ENCODE measurements at regions of chr13 and their contacts with region 1.

Region 1: DNA sequence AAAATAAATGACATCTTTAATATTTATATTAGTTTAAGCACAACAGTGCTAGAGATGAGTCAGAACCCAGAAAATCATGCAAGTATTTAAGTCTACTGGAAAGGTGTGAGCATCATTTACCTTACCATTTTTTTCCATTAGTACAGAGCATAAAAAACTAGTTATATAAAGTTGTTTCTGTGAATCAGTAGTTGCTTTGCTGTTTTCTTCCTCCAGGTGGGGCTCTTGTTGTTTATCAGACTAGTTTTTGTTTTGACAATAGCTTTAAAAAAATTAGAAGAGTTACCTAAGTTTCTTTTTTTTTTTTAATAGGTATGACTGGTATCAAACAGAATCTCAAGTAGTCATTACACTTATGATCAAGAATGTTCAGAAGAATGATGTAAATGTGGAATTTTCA is 12.7 kb downstream of the SUGT1 start:
- DNase-seq: peak; percentile 22
- H3K4me3 ChIP-seq: no peak overlapping the region
- H3K27ac ChIP-seq: no peak overlapping the region
- H3K4me1 ChIP-seq: no peaks in the 10 kb centered on the region; a peak in 1 of 4 replicates
- H3K27me3 ChIP-seq: no peaks in the 10 kb centered on the region
- CTCF ChIP-seq: peak; percentile 67
- EP300 ChIP-seq: no peak
- RAD21 ChIP-seq: peak; percentile 59

Region 2: GRCh38 chr13:52686381-52686780 is 21.1 kb after region 1 on chr13:
- CTCF ChIA-PET with region 1: interaction called, 25 read pairs
- POLR2A ChIA-PET with region 1: interaction called, 4 read pairs
- DNase-seq: no peak
- H3K4me3 ChIP-seq: no peak overlapping the region
- H3K27ac ChIP-seq: no peak overlapping the region
- H3K4me1 ChIP-seq: no peaks in the 10 kb centered on the region
- H3K27me3 ChIP-seq: no peaks in the 10 kb centered on the region
- CTCF ChIP-seq: no peak
- EP300 ChIP-seq: no peak
- RAD21 ChIP-seq: no peak

Region 3: DNA sequence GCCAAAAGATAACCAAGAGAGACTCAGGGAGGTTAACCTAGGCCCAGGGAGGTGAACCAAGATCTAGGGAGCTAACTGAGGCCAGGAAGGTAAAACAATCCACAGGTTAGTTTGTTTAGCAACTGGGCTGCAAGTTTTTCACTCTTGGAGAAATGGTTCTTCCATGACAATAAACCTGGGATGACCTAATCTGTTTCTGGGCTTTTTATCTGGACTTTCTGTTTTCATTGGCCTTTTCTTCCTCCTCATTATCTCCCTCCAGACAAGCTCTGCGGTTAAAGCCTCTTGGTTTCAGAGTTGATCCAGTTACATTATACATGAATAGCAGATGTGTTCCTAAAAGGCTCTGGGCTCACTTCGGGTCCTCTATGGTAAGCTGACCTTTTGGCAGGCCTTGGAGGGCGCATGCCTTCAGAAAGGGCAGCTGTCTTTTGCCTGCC is 138.9 kb after region 1 on chr13:
- CTCF ChIA-PET with region 1: interaction called, 68 read pairs
- POLR2A ChIA-PET with region 1: no interaction called
- DNase-seq: peak; percentile 30
- H3K4me3 ChIP-seq: no peak overlapping the region
- H3K27ac ChIP-seq: peak overlapping the region in 1 of 2 experiments; percentile 0; a peak in 1 of 4 replicates
- H3K4me1 ChIP-seq: peaks cover 0 to 3% of the 10 kb centered on the region in 2 experiments; a peak in 1 of 4 replicates
- H3K27me3 ChIP-seq: no peaks in the 10 kb centered on the region; the same call in 1 of the 2 replicates
- CTCF ChIP-seq: no peak
- EP300 ChIP-seq: no peak
- RAD21 ChIP-seq: no peak

Region 4: DNA sequence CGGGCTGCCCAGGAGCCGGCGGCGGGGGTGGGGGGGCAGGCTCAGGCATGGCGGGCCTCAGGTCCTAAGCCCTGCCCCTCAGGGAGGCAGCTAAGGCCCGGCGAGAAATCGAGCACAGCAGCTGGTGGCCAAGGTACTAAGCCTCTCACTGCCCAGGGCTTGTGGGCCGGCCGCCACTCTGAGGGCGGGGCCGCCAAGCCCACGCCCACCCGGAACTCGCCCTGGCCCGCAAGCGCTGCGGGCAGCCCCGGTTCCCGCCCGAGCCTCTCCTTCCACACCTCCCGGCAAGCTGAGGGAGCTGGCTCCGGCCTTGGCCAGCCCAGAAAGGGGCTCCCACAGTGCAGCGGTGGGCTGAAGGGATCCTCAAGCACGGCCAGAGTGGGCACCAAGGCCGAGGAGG is 150.0 kb after region 1 on chr13:
- CTCF ChIA-PET with region 1: interaction called, 15 read pairs
- POLR2A ChIA-PET with region 1: no interaction called
- DNase-seq: no peak
- H3K4me3 ChIP-seq: no peak overlapping the region
- H3K27ac ChIP-seq: no peak overlapping the region
- H3K4me1 ChIP-seq: no peaks in the 10 kb centered on the region
- H3K27me3 ChIP-seq: no peaks in the 10 kb centered on the region
- CTCF ChIP-seq: no peak
- EP300 ChIP-seq: no peak
- RAD21 ChIP-seq: no peak

Region 5: GRCh38 chr13:52850396-52851136 is 185.2 kb after region 1 on chr13:
- CTCF ChIA-PET with region 1: interaction called, 86 read pairs
- POLR2A ChIA-PET with region 1: no interaction called
- DNase-seq: peak; percentile 71
- H3K4me3 ChIP-seq: peak overlapping the region; percentile 69 to 97
- H3K27ac ChIP-seq: peak overlapping the region in 1 of 2 experiments; percentile 79; a peak in 2 of 4 replicates
- H3K4me1 ChIP-seq: peaks cover 6 to 34% of the 10 kb centered on the region in 2 experiments; a peak in 3 of 4 replicates
- H3K27me3 ChIP-seq: peaks cover 37% of the 10 kb centered on the region
- CTCF ChIP-seq: peak; percentile 26; the same call in 1 of the 2 replicates
- EP300 ChIP-seq: no peak
- RAD21 ChIP-seq: no peak

Region 6: DNA sequence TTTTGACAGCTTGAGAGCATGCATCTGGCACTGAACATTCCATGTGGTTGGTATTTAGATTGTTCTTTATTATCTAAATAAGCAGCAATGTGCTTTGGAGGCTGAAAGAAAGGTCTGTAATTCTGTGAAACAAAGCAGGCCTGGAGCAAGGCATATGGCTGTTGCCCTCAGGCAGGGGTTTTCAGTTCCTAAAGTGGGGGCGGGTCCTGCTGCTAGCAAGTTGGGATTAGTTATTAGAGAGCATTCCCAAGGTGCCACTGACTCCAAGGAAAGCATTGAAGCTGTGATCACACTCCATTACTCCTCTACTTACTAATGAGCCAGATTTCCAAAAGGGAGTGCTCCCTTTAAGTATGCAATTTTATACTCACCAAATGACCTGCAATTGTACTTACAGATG is 795.5 kb after region 1 on chr13:
- CTCF ChIA-PET with region 1: no interaction called
- POLR2A ChIA-PET with region 1: no interaction called
- DNase-seq: peak; percentile 22
- H3K4me3 ChIP-seq: no peak overlapping the region
- H3K27ac ChIP-seq: no peak overlapping the region
- H3K4me1 ChIP-seq: no peaks in the 10 kb centered on the region
- H3K27me3 ChIP-seq: no peaks in the 10 kb centered on the region
- CTCF ChIP-seq: no peak
- EP300 ChIP-seq: peak in 1 of 2 experiments; percentile 12; a peak in 1 of 4 replicates
- RAD21 ChIP-seq: no peak